ENCODE measurements at regions of chr2 and their contacts with region 1.

Region 1: GRCh38 chr2:208040199-208041171 is 15.2 kb upstream of the PLEKHM3 start:
- DNase-seq: peak; percentile 80 to 83
- H3K4me3 ChIP-seq: no peak overlapping the region
- H3K4me3 Mint-ChIP-seq: no peak overlapping the region
- H3K27ac Mint-ChIP-seq: peak overlapping the region; percentile 24
- H3K4me1 ChIP-seq: peaks cover 20% of the 10 kb centered on the region
- H3K4me1 Mint-ChIP-seq: peaks cover 26% of the 10 kb centered on the region
- H3K27me3 ChIP-seq: no peaks in the 10 kb centered on the region
- H3K27me3 Mint-ChIP-seq: no peaks in the 10 kb centered on the region
- CTCF ChIP-seq: peak; percentile 73 to 81

Region 2: GRCh38 chr2:207792244-207792785 is 248.2 kb before region 1 on chr2:
- CTCF ChIA-PET with region 1: interaction called, 10 read pairs
- POLR2A ChIA-PET with region 1: no interaction called
- intact Hi-C with region 1: no loop called
- DNase-seq: peak; percentile 54 to 62
- H3K4me3 ChIP-seq: no peak overlapping the region
- H3K4me3 Mint-ChIP-seq: peak overlapping the region; percentile 34
- H3K27ac Mint-ChIP-seq: peak overlapping the region; percentile 93
- H3K4me1 ChIP-seq: peaks cover 44% of the 10 kb centered on the region
- H3K4me1 Mint-ChIP-seq: peaks cover 27% of the 10 kb centered on the region
- H3K27me3 ChIP-seq: no peaks in the 10 kb centered on the region
- H3K27me3 Mint-ChIP-seq: no peaks in the 10 kb centered on the region
- CTCF ChIP-seq: no peak

Region 3: DNA sequence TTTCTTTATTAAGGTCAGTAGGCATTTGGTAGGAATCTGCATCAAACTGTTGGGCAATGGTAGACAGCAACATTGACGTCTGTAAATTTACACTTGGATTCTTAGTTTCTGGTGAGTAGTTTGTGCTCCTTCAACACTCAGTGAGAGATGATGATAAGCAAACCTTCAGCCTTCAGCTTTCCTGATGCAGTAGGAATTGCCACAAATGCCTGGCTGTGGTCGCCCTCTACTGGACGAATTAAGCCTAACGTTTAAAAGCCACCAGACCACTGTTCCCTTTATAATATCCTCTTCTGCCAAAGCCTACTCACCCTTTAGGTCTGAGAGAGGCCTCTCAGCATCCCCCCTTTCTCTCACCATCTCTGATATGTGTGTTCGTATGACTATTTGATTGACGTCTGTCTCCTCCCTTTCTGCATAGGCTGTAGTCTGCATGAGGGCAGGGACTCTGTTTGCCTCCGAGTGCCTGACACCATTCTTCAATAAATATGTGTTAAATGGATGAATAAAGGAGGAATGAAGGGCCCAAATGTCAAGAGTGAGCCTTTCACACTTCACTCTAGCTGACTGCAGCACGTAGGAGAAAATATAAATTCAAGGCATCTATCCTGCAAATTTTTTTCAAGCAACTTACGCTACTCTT is 31.9 kb after region 1 on chr2:
- CTCF ChIA-PET with region 1: interaction called, 13 read pairs
- POLR2A ChIA-PET with region 1: no interaction called
- intact Hi-C with region 1: no loop called
- DNase-seq: peak; percentile 73 to 83
- H3K4me3 ChIP-seq: no peak overlapping the region
- H3K4me3 Mint-ChIP-seq: no peak overlapping the region
- H3K27ac Mint-ChIP-seq: no peak overlapping the region
- H3K4me1 ChIP-seq: no peaks in the 10 kb centered on the region
- H3K4me1 Mint-ChIP-seq: peaks cover 3% of the 10 kb centered on the region
- H3K27me3 ChIP-seq: no peaks in the 10 kb centered on the region
- H3K27me3 Mint-ChIP-seq: no peaks in the 10 kb centered on the region
- CTCF ChIP-seq: peak; percentile 84

Measured in Caco-2 (cell line).